Posterior cingulate gyrus (tissue), 11 donors: ENCODE measurements at regions of chrX and their contacts with region 1.

Region 1: GRCh38 chrX:69293776-69294601 is 128.7 kb upstream of the PJA1 start:
- DNase-seq: peak in 1 of 10 donors; percentile 68

Region 2: GRCh38 chrX:69257499-69258127 is 36.4 kb before region 1 on chrX:
- intact Hi-C with region 1: no loop called
- DNase-seq: peak in 2 of 10 donors; percentile 10 to 72

Region 3: DNA sequence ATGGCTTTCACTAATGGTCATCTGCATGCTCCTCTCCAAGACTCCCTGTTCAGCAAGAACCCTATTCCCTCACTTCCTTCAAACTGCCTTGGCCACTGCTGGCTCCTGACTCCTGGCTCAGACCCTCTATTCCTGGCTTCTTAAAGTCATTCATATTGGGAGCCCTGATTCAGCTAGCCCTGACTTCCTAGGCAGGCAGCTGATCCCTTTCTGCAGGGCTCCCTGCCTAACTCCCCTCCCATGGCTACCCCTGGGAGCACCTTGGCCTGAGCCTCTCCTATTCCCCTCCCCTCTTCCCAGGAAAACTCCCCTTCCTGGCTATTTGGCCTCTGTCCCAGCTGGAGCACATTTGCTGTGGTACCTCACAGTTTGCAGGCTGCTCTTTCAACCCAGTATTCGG is 26.1 kb after region 1 on chrX:
- intact Hi-C with region 1: loop called (anchors 1 kb)
- DNase-seq: no peak

Region 4: DNA sequence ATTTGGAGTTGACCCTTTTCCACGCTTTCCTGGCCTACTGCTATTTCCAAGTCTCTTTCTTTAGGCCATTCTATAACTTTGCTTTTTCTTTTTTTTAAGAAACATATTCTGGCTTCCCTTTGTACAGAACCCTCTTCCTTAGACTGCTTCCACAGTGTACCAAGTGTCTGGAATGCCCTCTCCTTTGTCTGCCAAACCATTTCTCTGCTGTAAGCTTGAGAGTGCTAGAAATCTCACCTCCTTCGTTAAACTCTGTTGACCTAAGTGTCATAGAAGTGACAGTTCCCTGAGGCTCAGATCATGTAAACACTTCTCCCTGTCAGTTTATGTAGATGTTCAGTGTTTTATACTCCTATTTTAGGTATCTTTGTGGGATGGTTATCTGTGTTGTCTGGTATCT is 430.3 kb after region 1 on chrX:
- intact Hi-C with region 1: no loop called
- DNase-seq: no peak